HEK293 (cell line): ENCODE measurements at regions of chr9 and their contacts with region 1.

Region 1: GRCh38 chr9:33778700-33779351 is 16.5 kb upstream of the PRSS3 start:
- H3K4me3 ChIP-seq: no peak overlapping the region
- H3K27ac ChIP-seq: no peak overlapping the region
- H3K4me1 ChIP-seq: no peaks in the 10 kb centered on the region
- CTCF ChIP-seq: no peak

Region 2: DNA sequence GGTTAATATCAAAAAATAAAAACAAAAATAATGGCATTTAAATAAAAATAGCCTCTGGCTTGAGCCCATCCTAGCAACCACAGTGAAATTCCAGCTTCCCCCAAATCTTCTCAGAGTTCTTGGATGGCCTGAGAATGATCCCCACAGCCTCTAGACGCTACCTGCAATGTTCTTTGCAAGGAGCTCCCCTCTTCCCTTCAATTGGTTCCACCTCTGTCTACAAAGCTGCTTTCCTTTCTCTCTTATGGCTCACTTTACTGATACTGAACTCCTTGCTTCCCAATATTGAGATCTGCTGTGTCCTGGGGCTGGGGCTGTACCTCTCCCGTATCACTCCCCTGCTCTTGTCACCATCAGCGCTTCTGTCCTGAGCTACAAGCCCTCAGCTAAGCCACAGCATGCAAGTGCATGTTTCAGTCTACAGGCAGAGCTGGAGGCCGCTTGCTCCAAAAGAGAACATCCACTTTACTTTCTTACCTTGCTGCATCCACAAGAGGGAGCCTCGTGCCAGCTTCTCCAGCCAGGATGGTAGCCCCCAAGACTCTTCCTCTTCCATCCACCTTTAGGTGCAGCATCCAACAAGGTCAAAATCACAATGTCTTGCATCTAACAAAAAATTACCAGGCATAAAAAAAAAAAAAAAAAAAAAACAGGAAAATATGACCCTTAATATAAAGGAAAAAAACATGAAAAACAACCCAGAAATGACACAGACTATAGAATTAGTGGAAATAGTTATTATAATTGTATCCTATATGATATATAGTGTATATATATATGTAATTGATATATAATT is 40.8 kb before region 1 on chr9:
- CTCF ChIA-PET with region 1: interaction called, 52 read pairs
- POLR2A ChIA-PET with region 1: no interaction called
- H3K4me3 ChIP-seq: no peak overlapping the region
- H3K27ac ChIP-seq: no peak overlapping the region
- H3K4me1 ChIP-seq: no peaks in the 10 kb centered on the region
- CTCF ChIP-seq: peak; percentile 65

Region 3: GRCh38 chr9:33765411-33765810 is 13.4 kb before region 1 on chr9:
- CTCF ChIA-PET with region 1: interaction called, 12 read pairs
- POLR2A ChIA-PET with region 1: no interaction called
- H3K4me3 ChIP-seq: no peak overlapping the region
- H3K27ac ChIP-seq: no peak overlapping the region
- H3K4me1 ChIP-seq: no peaks in the 10 kb centered on the region
- CTCF ChIP-seq: no peak

Region 4: DNA sequence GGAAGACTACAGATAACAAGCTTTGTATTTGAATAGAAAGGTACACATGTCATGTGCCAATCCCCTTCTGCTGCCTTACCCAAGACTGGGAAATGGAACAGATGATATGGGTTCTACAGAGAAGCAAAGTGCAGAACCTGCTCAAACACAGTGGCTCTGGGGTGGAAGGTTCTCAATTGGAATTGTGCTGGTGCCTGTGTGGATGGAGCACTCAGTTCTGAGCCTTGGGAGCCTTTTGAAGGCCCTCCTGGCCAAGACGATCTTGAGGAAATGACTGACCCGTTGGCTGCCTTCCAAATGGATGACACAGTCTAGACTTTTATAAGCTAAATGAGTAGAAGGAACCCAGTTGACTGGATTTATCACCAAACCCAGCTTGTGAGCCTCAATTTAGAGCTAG is 12.3 kb after region 1 on chr9:
- CTCF ChIA-PET with region 1: interaction called, 24 read pairs
- POLR2A ChIA-PET with region 1: no interaction called
- H3K4me3 ChIP-seq: no peak overlapping the region
- H3K27ac ChIP-seq: no peak overlapping the region
- H3K4me1 ChIP-seq: no peaks in the 10 kb centered on the region
- CTCF ChIP-seq: no peak